Activated naive CD4-positive, alpha-beta T cell treated with anti-CD3 and anti-CD28 coated beads for 36 hours (primary cell): ENCODE measurements at regions of chr11 and their contacts with region 1.

Region 1: GRCh38 chr11:33257897-33258630 is 883 bp downstream of the HIPK3 start:
- DNase-seq: peak; percentile 77
- H3K4me3 Mint-ChIP-seq: peak overlapping the region; percentile 91
- H3K27ac Mint-ChIP-seq: peak overlapping the region; percentile 93
- H3K4me1 Mint-ChIP-seq: peaks cover 37% of the 10 kb centered on the region
- H3K27me3 Mint-ChIP-seq: no peaks in the 10 kb centered on the region

Region 2: DNA sequence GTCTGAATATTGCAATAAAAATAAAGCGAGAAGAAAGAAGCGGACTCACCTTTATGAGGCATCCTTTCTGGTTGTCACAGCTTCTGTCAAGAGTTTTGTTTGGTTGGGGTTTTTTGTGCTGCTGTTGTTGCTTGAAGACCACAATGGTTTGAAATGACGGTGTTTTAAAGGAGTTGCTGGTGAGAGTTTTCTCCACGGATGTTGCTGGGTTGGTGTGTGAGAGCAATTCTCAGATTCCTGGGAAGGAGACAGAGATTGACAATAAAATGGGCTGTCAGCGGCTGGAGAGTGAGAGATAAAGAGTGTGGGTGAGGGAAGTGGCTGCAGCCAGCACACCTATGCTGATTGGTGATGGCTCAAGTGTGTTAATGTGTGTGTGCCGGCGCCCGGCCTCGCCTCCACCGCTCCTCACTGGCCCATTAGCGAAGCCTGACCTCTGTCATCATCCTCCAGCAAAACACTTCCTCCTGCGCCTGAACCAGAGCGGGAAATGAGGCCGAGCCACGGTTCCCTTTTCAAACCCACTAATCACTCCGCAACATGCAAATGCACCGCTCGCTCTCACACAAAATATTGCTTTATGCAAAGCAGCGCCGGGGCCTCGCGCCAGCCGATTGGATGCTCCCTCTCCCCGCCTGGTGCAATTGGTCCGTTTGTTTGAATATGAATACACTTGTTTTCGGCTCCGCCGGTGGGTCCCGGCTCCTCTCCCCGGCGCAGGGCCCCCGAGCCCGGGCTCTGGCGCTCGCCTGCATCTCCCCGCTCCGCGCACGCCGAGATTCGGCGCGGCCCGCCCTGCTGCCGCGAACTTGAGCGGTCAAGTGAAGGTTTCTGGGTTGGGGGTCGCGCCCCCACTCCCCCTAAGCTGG is 1447.1 kb before region 1 on chr11 and contains the start of gene PAX6:
- CTCF ChIA-PET with region 1: no interaction called
- intact Hi-C with region 1: loop called (anchors 5 kb)
- DNase-seq: peak; percentile 82
- H3K4me3 Mint-ChIP-seq: peak within 1 kb of the TSS; percentile 73
- H3K27ac Mint-ChIP-seq: no peak within 1 kb of the TSS
- H3K4me1 Mint-ChIP-seq: peaks cover 47% of the 10 kb centered on the region
- H3K27me3 Mint-ChIP-seq: peaks cover 76% of the 10 kb centered on the region
- total RNA-seq, gene PAX6: 1.5 TPM

Region 3: DNA sequence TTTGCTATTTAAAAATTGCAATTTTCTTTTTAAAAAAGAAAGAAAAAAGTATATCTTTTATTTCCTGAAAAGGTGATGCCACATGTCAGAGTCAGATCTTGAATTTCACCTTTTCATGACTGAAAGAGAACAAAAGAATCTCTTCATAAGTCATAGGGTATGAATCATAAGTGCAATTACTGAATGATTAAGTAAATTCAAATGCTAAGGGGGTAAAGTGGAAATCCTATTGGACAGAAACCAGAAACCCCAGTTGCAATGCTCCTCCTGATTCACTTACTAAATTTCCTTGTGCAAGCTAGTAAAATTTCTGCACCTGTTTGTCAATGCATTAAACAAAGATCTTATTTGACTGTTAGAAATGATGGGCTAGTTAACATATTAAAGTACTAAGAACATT is 436.5 kb before region 1 on chr11:
- CTCF ChIA-PET with region 1: no interaction called
- intact Hi-C with region 1: loop called (anchors 5 kb)
- DNase-seq: peak; percentile 10
- H3K4me3 Mint-ChIP-seq: no peak overlapping the region
- H3K27ac Mint-ChIP-seq: peak overlapping the region; percentile 4
- H3K4me1 Mint-ChIP-seq: peaks cover 25% of the 10 kb centered on the region
- H3K27me3 Mint-ChIP-seq: no peaks in the 10 kb centered on the region

Region 4: GRCh38 chr11:33329705-33330329 is 71.8 kb after region 1 on chr11:
- CTCF ChIA-PET with region 1: no interaction called
- intact Hi-C with region 1: loop called (anchors 1 kb)
- DNase-seq: peak; percentile 66
- H3K4me3 Mint-ChIP-seq: no peak overlapping the region
- H3K27ac Mint-ChIP-seq: no peak overlapping the region
- H3K4me1 Mint-ChIP-seq: peaks cover 13% of the 10 kb centered on the region
- H3K27me3 Mint-ChIP-seq: no peaks in the 10 kb centered on the region

Region 5: GRCh38 chr11:33736148-33736809 is 478.2 kb after region 1 on chr11 and contains the start of gene CD59:
- CTCF ChIA-PET with region 1: no interaction called
- intact Hi-C with region 1: loop called (anchors 5 kb)
- DNase-seq: peak; percentile 95
- H3K4me3 Mint-ChIP-seq: peak within 1 kb of the TSS; percentile 78
- H3K27ac Mint-ChIP-seq: peak within 1 kb of the TSS; percentile 61
- H3K4me1 Mint-ChIP-seq: peaks cover 33% of the 10 kb centered on the region
- H3K27me3 Mint-ChIP-seq: no peaks in the 10 kb centered on the region
- total RNA-seq, gene CD59: 59.9 to 61.9 TPM

Region 6: GRCh38 chr11:33829433-33830141 is 571.5 kb after region 1 on chr11:
- CTCF ChIA-PET with region 1: no interaction called
- intact Hi-C with region 1: loop called (anchors 5 kb)
- DNase-seq: peak; percentile 85
- H3K4me3 Mint-ChIP-seq: peak overlapping the region; percentile 57
- H3K27ac Mint-ChIP-seq: no peak overlapping the region
- H3K4me1 Mint-ChIP-seq: peaks cover 2% of the 10 kb centered on the region
- H3K27me3 Mint-ChIP-seq: peaks cover 42% of the 10 kb centered on the region

Region 7: GRCh38 chr11:34916015-34916842 is 1658.2 kb after region 1 on chr11 and contains the starts of genes APIP and PDHX:
- CTCF ChIA-PET with region 1: no interaction called
- intact Hi-C with region 1: loop called (anchors 5 kb)
- DNase-seq: peak; percentile 98
- H3K4me3 Mint-ChIP-seq: peak within 1 kb of the TSS; percentile 99
- H3K27ac Mint-ChIP-seq: peak within 1 kb of the TSS; percentile 96
- H3K4me1 Mint-ChIP-seq: peaks cover 44% of the 10 kb centered on the region
- H3K27me3 Mint-ChIP-seq: no peaks in the 10 kb centered on the region
- total RNA-seq, gene APIP: 42.4 to 42.5 TPM
- total RNA-seq, gene PDHX: 38.2 to 40.9 TPM